GM10248 (cell line): ENCODE measurements at regions of chr16 and their contacts with region 1.

Region 1: GRCh38 chr16:48318630-48319029 is 66.6 kb downstream of the SIAH1 start:
- DNase-seq: no peak
- CTCF ChIP-seq: no peak

Region 2: DNA sequence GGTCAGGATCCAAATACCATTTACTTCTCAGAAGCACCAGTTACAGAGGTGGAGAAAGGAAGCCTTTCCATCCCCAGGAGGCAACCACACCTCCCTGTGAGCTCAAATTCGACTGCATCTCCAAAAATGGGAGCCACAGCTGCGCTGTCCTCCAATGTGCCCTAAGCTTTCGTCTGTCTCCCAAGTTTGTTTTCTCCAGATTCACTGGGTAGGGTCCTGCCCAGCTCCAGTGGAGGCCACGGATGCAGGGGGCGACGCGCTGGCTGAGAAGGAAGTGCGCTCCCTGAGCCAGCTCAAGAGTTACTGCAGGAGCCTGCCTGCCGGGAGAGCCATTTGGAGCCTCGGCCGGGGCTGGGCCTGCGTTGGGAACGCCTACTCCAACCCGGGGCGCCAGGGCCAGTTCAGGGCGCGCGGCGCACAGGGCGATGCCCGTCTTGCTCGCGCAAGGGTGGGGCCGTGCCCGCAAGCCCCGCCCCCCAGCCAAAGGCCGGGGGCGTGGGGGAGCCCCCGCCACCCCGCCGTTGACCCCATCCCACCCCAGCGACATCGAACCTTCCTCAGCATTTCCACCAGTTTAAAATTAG is 47.0 kb after region 1 on chr16:
- CTCF ChIA-PET with region 1: no interaction called
- POLR2A ChIA-PET with region 1: interaction called, 11 read pairs
- DNase-seq: peak; percentile 86
- CTCF ChIP-seq: no peak